Panc1 (cell line): ENCODE measurements at regions of chr20 and their contacts with region 1.

Region 1: GRCh38 chr20:13839421-13840092 is 54.7 kb downstream of the NDUFAF5 start:
- DNase-seq: no peak
- ATAC-seq: no peak
- H3K4me3 ChIP-seq: no peak overlapping the region
- H3K27ac ChIP-seq: no peak overlapping the region
- H3K4me1 ChIP-seq: no peaks in the 10 kb centered on the region
- H3K27me3 ChIP-seq: 0 out of 2 replicates have a peak, but pooled peaks cover 2% of the 10 kb centered on the region
- CTCF ChIP-seq: no peak

Region 2: DNA sequence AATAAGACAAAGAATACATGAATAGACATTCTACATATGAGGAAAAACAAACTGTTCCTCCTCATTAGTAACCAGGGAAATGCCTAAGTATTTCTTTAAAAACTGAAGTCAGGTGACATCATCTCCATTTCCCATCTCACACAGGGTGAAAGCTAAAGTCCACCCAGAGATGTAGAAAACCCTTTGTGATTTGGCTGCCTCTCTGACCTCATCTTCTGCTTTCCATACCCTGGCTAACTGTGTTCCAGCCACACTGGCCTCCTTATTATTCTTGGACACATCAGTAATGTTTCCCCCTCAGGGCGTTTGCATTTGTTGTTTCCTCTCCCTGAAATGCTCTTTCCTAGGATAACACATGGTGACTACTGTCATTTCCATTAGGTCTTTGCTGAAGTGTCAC is 95.2 kb before region 1 on chr20:
- CTCF ChIA-PET with region 1: no interaction called
- POLR2A ChIA-PET with region 1: no interaction called
- in situ Hi-C with region 1: no loop called
- intact Hi-C with region 1: no loop called
- DNase-seq: no peak
- ATAC-seq: no peak
- H3K4me3 ChIP-seq: no peak overlapping the region
- H3K27ac ChIP-seq: no peak overlapping the region
- H3K4me1 ChIP-seq: no peaks in the 10 kb centered on the region
- H3K27me3 ChIP-seq: no peaks in the 10 kb centered on the region
- CTCF ChIP-seq: no peak

Region 3: DNA sequence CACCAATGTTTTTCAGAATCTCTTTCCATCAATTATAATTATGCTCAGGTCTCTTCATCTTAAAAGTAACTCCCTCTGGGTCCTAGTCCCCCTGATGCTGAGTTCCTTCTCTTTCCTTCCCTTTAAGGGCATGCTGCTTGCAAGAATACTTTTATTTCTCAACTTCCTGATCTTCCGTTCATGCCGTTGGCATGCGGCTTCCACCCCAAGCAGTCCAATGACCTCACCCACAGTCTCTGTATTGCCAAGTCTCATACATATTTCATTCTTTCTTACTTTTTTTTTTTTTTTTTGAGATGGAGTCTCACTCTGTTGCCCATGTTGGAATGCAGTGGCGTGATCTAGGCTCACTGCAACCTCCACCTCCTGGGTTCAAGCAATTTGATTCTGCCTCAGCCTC is 28.8 kb after region 1 on chr20:
- CTCF ChIA-PET with region 1: interaction called, 14 read pairs
- POLR2A ChIA-PET with region 1: no interaction called
- in situ Hi-C with region 1: no loop called
- intact Hi-C with region 1: no loop called
- DNase-seq: no peak
- ATAC-seq: no peak
- H3K4me3 ChIP-seq: no peak overlapping the region
- H3K27ac ChIP-seq: no peak overlapping the region
- H3K4me1 ChIP-seq: no peaks in the 10 kb centered on the region
- H3K27me3 ChIP-seq: peaks cover 3% of the 10 kb centered on the region; the same call in 1 of the 2 replicates
- CTCF ChIP-seq: no peak